ENCODE measurements at regions of chr1 and their contacts with region 1.

Region 1: DNA sequence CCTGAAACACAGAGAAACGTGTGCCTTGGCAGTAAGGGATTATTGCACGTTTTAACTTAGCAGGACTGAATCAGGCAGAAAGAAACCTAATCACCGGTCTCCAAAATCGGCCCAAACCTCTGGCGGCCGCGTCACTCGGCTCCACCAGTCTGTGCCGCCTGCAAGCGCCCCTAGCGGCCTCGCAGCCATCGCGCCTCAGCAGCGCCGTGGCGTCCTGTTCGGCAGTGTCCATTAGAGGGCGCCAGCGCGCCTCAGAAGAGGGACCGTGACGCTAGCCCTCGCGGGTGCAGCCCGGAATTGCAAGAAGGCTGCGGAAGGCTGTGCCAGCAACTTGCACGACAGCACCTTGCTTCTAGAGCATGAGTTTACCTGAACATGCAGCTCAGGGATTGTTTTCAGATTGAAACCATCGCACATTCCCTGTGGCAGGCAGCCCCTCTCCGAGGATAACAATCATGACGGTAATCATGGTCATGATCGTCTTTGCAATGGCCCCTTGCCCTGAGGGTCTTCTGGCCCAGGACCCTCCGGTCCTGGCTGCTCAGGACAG is 164.4 kb downstream of the TRIM33 start:
- DNase-seq: peak; percentile 98
- ATAC-seq: peak; percentile 99
- H3K4me3 ChIP-seq: peak overlapping the region; percentile 73
- H3K27ac ChIP-seq: no peak overlapping the region
- H3K4me1 ChIP-seq: peaks cover 18% of the 10 kb centered on the region; the same call in 1 of the 2 replicates
- H3K27me3 ChIP-seq: no peaks in the 10 kb centered on the region
- CTCF ChIP-seq: peak; percentile 100

Region 2: DNA sequence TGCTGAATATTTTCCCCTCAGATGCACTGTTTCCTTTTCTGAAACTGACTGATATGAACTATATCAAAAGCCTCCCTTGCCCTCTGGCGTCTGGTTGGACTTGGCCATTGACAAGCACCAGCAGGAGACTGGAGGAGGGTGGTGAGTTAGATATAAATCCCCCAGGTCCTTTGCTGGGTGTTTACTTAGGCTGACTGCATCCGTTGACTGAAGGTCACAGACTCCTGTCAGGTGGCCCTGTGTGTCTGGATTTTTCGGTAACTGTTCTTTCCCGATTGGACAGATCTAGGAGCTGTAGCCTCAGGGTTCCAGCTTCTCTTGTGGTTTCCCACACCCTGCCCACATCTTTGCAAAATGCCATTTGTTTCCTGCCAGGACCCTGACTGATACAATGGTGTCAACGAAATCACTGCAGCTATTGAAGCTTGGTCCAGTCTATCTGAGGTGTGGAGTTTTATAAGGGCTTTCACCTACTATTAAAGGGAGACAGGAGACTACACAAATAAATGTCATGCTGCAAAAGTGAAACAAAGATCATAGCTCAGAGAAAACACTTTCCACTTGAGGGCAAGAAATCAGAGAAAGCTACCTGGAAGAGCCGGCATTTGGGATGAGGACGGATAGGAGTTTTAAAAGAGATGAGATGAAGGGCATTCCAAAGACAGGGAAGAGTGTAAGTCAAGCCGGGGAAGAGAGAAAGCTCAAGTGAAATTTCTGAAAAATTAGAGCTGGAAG is 957.8 kb before region 1 on chr1:
- CTCF ChIA-PET with region 1: no interaction called
- POLR2A ChIA-PET with region 1: no interaction called
- intact Hi-C with region 1: no loop called
- DNase-seq: peak; percentile 88
- ATAC-seq: peak; percentile 10
- H3K4me3 ChIP-seq: peak overlapping the region; percentile 75
- H3K27ac ChIP-seq: peak overlapping the region; percentile 42
- H3K4me1 ChIP-seq: peaks cover 26% of the 10 kb centered on the region
- H3K27me3 ChIP-seq: no peaks in the 10 kb centered on the region
- CTCF ChIP-seq: peak; percentile 28; the same call in 1 of the 2 replicates

Region 3: GRCh38 chr1:114299331-114299975 is 47.1 kb before region 1 on chr1:
- CTCF ChIA-PET with region 1: no interaction called
- POLR2A ChIA-PET with region 1: no interaction called
- intact Hi-C with region 1: no loop called
- DNase-seq: no peak
- ATAC-seq: no peak
- H3K4me3 ChIP-seq: no peak overlapping the region
- H3K27ac ChIP-seq: no peak overlapping the region
- H3K4me1 ChIP-seq: no peaks in the 10 kb centered on the region
- H3K27me3 ChIP-seq: peaks cover 80% of the 10 kb centered on the region
- CTCF ChIP-seq: no peak

Region 4: GRCh38 chr1:114428083-114428749 is 81.7 kb after region 1 on chr1:
- CTCF ChIA-PET with region 1: interaction called, 5 read pairs
- POLR2A ChIA-PET with region 1: no interaction called
- intact Hi-C with region 1: loop called (anchors 1 kb)
- DNase-seq: peak; percentile 38
- ATAC-seq: no peak; the same call in 1 of the 2 replicates
- H3K4me3 ChIP-seq: no peak overlapping the region
- H3K27ac ChIP-seq: no peak overlapping the region
- H3K4me1 ChIP-seq: no peaks in the 10 kb centered on the region
- H3K27me3 ChIP-seq: no peaks in the 10 kb centered on the region
- CTCF ChIP-seq: peak; percentile 65

Region 5: GRCh38 chr1:114511032-114511785 is 164.7 kb after region 1 on chr1 and contains the start of gene TRIM33:
- CTCF ChIA-PET with region 1: no interaction called
- POLR2A ChIA-PET with region 1: no interaction called
- intact Hi-C with region 1: loop called (anchors 2 kb)
- DNase-seq: peak; percentile 97
- ATAC-seq: peak; percentile 72
- H3K4me3 ChIP-seq: peak within 1 kb of the TSS; percentile 90
- H3K27ac ChIP-seq: peak within 1 kb of the TSS; percentile 62
- H3K4me1 ChIP-seq: peaks cover 21% of the 10 kb centered on the region
- H3K27me3 ChIP-seq: no peaks in the 10 kb centered on the region
- CTCF ChIP-seq: no peak
- total RNA-seq, gene TRIM33: 28.8 and 36.7 TPM in 2 replicates

Region 6: GRCh38 chr1:114558544-114558943 is 212.0 kb after region 1 on chr1:
- CTCF ChIA-PET with region 1: no interaction called
- POLR2A ChIA-PET with region 1: no interaction called
- intact Hi-C with region 1: loop called (anchors 1 kb)
- DNase-seq: peak; percentile 29
- ATAC-seq: peak; percentile 38; the same call in 1 of the 2 replicates
- H3K4me3 ChIP-seq: no peak overlapping the region
- H3K27ac ChIP-seq: no peak overlapping the region
- H3K4me1 ChIP-seq: no peaks in the 10 kb centered on the region
- H3K27me3 ChIP-seq: no peaks in the 10 kb centered on the region
- CTCF ChIP-seq: peak; percentile 63

Region 7: DNA sequence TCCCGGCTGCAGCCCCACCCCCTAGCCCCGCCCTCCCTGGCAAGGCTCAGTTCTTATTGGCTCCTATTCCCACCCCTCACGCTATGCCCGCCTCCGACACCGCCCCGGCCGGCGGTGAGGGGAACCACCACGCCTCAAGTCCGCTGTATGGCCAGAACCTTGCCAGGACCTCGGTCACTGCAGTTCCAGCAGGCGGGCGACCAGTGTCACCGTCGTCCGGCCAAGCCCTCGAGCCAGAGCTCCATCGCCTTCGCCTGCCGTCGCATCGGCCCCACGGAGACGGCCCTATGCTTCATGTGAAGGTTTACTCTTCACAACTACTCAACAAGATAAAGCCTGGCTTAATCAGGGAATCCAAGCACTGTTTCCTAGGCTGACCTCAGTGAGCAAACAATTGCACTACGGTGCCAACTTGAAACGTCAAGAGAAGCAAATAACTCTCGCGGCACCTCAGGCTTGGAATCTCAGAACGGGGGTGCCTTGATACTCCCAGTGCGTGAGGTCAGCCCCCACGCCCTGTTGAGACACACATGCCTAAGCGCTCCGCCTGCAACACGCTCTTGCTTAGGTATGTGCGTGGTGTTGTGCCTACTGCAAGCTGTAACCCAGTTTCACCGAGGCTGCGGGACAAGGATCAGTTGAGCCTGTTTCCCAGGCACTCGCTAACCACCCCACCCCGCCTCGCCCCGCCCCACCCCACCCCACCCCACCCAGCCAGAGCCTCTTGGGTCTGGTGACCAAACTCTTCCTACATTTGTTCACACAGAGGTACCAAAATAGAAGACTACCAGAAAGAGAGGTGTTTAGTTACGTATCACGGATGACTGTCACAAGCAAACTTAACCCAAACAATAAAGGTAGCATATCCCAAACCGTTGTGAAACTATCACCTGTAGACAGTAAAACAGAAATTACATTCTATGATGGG is 323.8 kb after region 1 on chr1:
- CTCF ChIA-PET with region 1: interaction called, 6 read pairs
- POLR2A ChIA-PET with region 1: no interaction called
- intact Hi-C with region 1: loop called (anchors 1 kb)
- DNase-seq: peak; percentile 93
- ATAC-seq: peak; percentile 92
- H3K4me3 ChIP-seq: peak overlapping the region; percentile 85
- H3K27ac ChIP-seq: peak overlapping the region; percentile 80
- H3K4me1 ChIP-seq: peaks cover 12% of the 10 kb centered on the region
- H3K27me3 ChIP-seq: 0 out of 2 replicates have a peak, but pooled peaks cover 6% of the 10 kb centered on the region
- CTCF ChIP-seq: no peak

Measured in PC-3 (cell line).